ENCODE measurements at regions of chr3 and their contacts with region 1.

Region 1: GRCh38 chr3:50227390-50228183 is 8.4 kb upstream of the GNAI2 start:
- DNase-seq: peak; percentile 78 to 85
- ATAC-seq: peak; percentile 85 to 87
- H3K4me3 ChIP-seq: peak overlapping the region; percentile 70 to 80 (median 70)
- H3K27ac ChIP-seq: peak overlapping the region; percentile 64 to 74 (median 66)
- H3K4me1 ChIP-seq: peaks cover 13 to 21% of the 10 kb centered on the region in 2 donors
- H3K27me3 ChIP-seq: no peaks in the 10 kb centered on the region
- CTCF ChIP-seq: peak; percentile 77 to 98 (median 93)
- POLR2A ChIP-seq: peak; percentile 7 to 24

Region 2: GRCh38 chr3:50121416-50122032 is 106.1 kb before region 1 on chr3:
- in situ Hi-C with region 1: no loop called
- intact Hi-C with region 1: loop called (anchors 2 kb)
- DNase-seq: peak; percentile 45 to 66
- ATAC-seq: peak; percentile 89 to 91
- H3K4me3 ChIP-seq: no peak overlapping the region
- H3K27ac ChIP-seq: peak overlapping the region in 1 of 4 donors; percentile 22
- H3K4me1 ChIP-seq: peaks cover 3 to 5% of the 10 kb centered on the region in 2 donors
- H3K27me3 ChIP-seq: no peaks in the 10 kb centered on the region
- CTCF ChIP-seq: peak; percentile 82 to 93 (median 87)
- POLR2A ChIP-seq: no peak

Region 3: GRCh38 chr3:50163572-50164455 is 63.8 kb before region 1 on chr3:
- in situ Hi-C with region 1: no loop called
- intact Hi-C with region 1: no loop called
- DNase-seq: peak; percentile 76 to 91
- ATAC-seq: peak; percentile 77 to 86
- H3K4me3 ChIP-seq: no peak overlapping the region
- H3K27ac ChIP-seq: peak overlapping the region; percentile 75 to 82 (median 78)
- H3K4me1 ChIP-seq: peaks cover 53 to 76% of the 10 kb centered on the region in 2 donors
- H3K27me3 ChIP-seq: no peaks in the 10 kb centered on the region
- CTCF ChIP-seq: no peak
- POLR2A ChIP-seq: no peak

Region 4: DNA sequence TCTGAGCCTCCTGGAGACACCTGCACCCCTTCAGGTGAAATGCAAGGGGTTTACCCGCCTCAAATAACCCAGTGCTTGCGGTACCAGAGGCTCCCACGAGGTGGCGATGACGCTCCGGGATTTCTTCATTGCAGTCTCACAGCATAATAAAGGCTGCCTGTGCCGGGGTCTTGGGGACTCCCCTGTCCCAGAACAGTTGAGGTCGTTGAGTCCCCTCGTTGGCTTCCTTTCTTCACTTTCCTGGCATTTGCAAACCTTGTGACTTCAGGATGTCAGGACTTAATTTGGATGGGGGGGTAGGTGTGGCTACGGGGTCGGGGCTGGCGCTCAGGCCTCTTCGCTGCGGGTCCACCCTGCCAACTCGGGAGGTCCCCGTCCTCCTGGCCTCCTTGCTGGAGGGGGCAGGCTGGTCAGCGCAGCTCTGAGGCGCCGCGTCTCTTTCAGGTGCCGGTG is 34.9 kb before region 1 on chr3:
- in situ Hi-C with region 1: no loop called
- intact Hi-C with region 1: loop called (anchors 1 kb)
- DNase-seq: peak in 1 of 2 donors; percentile 47
- ATAC-seq: peak; percentile 39 to 45
- H3K4me3 ChIP-seq: peak overlapping the region in 1 of 4 donors; percentile 25
- H3K27ac ChIP-seq: no peak overlapping the region
- H3K4me1 ChIP-seq: peaks cover 12 to 22% of the 10 kb centered on the region in 2 donors
- H3K27me3 ChIP-seq: peaks cover 15 to 18% (median 16%) of the 10 kb centered on the region in 3 donors
- CTCF ChIP-seq: peak; percentile 87 to 93 (median 93)
- POLR2A ChIP-seq: no peak

Region 5: GRCh38 chr3:50237754-50238548 is 10.4 kb after region 1 on chr3:
- in situ Hi-C with region 1: no loop called
- intact Hi-C with region 1: loop called (anchors 1 kb)
- DNase-seq: peak; percentile 59 to 64
- ATAC-seq: no peak
- H3K4me3 ChIP-seq: peak overlapping the region; percentile 58 to 82 (median 70)
- H3K27ac ChIP-seq: peak overlapping the region; percentile 87 to 96 (median 87)
- H3K4me1 ChIP-seq: peaks cover 57 to 65% of the 10 kb centered on the region in 2 donors
- H3K27me3 ChIP-seq: no peaks in the 10 kb centered on the region
- CTCF ChIP-seq: no peak
- POLR2A ChIP-seq: peak; percentile 39 to 63

Region 6: GRCh38 chr3:50245831-50246516 is 18.4 kb after region 1 on chr3:
- in situ Hi-C with region 1: no loop called
- intact Hi-C with region 1: loop called (anchors 1 kb)
- DNase-seq: peak; percentile 78 to 84
- ATAC-seq: peak; percentile 73 to 76
- H3K4me3 ChIP-seq: peak overlapping the region; percentile 57 to 64 (median 61)
- H3K27ac ChIP-seq: peak overlapping the region; percentile 80 to 96 (median 87)
- H3K4me1 ChIP-seq: peaks cover 76 to 92% of the 10 kb centered on the region in 2 donors
- H3K27me3 ChIP-seq: no peaks in the 10 kb centered on the region
- CTCF ChIP-seq: peak; percentile 95 to 100 (median 99)
- POLR2A ChIP-seq: no peak

Region 7: GRCh38 chr3:50272911-50273693 is 45.5 kb after region 1 on chr3:
- in situ Hi-C with region 1: loop called in 2 of 4 experiments (anchors 5 to 10 kb)
- intact Hi-C with region 1: loop called (anchors 1 kb)
- DNase-seq: peak; percentile 68 to 80
- ATAC-seq: peak; percentile 82 to 85
- H3K4me3 ChIP-seq: peak overlapping the region; percentile 38 to 56 (median 51)
- H3K27ac ChIP-seq: peak overlapping the region in 2 of 4 donors; percentile 8 to 15
- H3K4me1 ChIP-seq: peaks cover 17 to 38% of the 10 kb centered on the region in 2 donors
- H3K27me3 ChIP-seq: no peaks in the 10 kb centered on the region
- CTCF ChIP-seq: peak; percentile 97 to 99 (median 99)
- POLR2A ChIP-seq: peak in 1 of 2 donors; percentile 11

Region 8: DNA sequence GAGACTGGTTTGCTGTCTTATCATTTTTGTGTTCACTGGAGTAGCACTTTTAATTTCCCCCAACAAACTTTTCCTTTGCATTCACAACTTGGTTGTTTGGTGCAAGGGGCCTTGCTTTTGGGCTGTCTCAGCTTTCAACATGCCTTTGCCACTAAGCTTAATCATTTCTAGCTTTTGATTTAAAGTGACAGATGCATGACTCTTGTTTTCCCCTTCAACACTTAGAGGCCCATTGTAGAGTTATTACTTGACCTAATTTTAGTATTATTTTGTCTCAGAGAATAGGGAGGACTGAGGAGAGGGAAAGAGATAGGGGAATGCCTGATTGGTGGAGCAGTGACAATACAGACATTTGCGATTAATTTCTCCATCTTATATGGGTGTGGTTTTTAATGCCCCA is 817.4 kb after region 1 on chr3:
- in situ Hi-C with region 1: no loop called
- intact Hi-C with region 1: no loop called
- DNase-seq: no peak
- ATAC-seq: no peak
- H3K4me3 ChIP-seq: no peak overlapping the region
- H3K27ac ChIP-seq: no peak overlapping the region
- H3K4me1 ChIP-seq: no peaks in the 10 kb centered on the region
- H3K27me3 ChIP-seq: no peaks in the 10 kb centered on the region
- CTCF ChIP-seq: no peak
- POLR2A ChIP-seq: no peak

Measured in gastrocnemius medialis (tissue), 4 donors.